ENCODE measurements at regions of chr3 and their contacts with region 1.

Region 1: GRCh38 chr3:4978204-4978965 is 852 bp upstream of the BHLHE40 start:
- DNase-seq: peak; percentile 95 to 99
- H3K4me3 ChIP-seq: peak overlapping the region; percentile 79 to 94
- H3K27ac ChIP-seq: peak overlapping the region; percentile 97 to 99
- H3K4me1 ChIP-seq: peaks cover 5 to 34% of the 10 kb centered on the region in 2 donors
- H3K27me3 ChIP-seq: no peaks in the 10 kb centered on the region
- CTCF ChIP-seq: no peak

Region 2: GRCh38 chr3:4303187-4304123 is 674.9 kb before region 1 on chr3 and contains the start of gene SETMAR:
- intact Hi-C with region 1: loop called (anchors 5 kb)
- DNase-seq: peak; percentile 75 to 97
- H3K4me3 ChIP-seq: peak within 1 kb of the TSS; percentile 90 to 92
- H3K27ac ChIP-seq: peak within 1 kb of the TSS; percentile 91 to 96
- H3K4me1 ChIP-seq: peaks cover 8 to 42% of the 10 kb centered on the region in 2 donors
- H3K27me3 ChIP-seq: no peaks in the 10 kb centered on the region
- CTCF ChIP-seq: no peak
- total RNA-seq, gene SETMAR: 13.6 TPM

Region 3: GRCh38 chr3:4584456-4585249 is 393.7 kb before region 1 on chr3:
- intact Hi-C with region 1: loop called (anchors 5 kb)
- DNase-seq: no peak
- H3K4me3 ChIP-seq: peak overlapping the region; percentile 43 to 57
- H3K27ac ChIP-seq: peak overlapping the region; percentile 84 to 86
- H3K4me1 ChIP-seq: peaks cover 0 to 41% of the 10 kb centered on the region in 2 donors
- H3K27me3 ChIP-seq: no peaks in the 10 kb centered on the region
- CTCF ChIP-seq: peak in 2 of 3 experiments; percentile 39 to 55

Region 4: GRCh38 chr3:4741404-4742307 is 236.7 kb before region 1 on chr3:
- intact Hi-C with region 1: loop called (anchors 2 kb)
- DNase-seq: peak; percentile 41 to 91
- H3K4me3 ChIP-seq: no peak overlapping the region
- H3K27ac ChIP-seq: peak overlapping the region; percentile 93 to 96
- H3K4me1 ChIP-seq: peaks cover 13 to 24% of the 10 kb centered on the region in 2 donors
- H3K27me3 ChIP-seq: no peaks in the 10 kb centered on the region
- CTCF ChIP-seq: no peak

Region 5: DNA sequence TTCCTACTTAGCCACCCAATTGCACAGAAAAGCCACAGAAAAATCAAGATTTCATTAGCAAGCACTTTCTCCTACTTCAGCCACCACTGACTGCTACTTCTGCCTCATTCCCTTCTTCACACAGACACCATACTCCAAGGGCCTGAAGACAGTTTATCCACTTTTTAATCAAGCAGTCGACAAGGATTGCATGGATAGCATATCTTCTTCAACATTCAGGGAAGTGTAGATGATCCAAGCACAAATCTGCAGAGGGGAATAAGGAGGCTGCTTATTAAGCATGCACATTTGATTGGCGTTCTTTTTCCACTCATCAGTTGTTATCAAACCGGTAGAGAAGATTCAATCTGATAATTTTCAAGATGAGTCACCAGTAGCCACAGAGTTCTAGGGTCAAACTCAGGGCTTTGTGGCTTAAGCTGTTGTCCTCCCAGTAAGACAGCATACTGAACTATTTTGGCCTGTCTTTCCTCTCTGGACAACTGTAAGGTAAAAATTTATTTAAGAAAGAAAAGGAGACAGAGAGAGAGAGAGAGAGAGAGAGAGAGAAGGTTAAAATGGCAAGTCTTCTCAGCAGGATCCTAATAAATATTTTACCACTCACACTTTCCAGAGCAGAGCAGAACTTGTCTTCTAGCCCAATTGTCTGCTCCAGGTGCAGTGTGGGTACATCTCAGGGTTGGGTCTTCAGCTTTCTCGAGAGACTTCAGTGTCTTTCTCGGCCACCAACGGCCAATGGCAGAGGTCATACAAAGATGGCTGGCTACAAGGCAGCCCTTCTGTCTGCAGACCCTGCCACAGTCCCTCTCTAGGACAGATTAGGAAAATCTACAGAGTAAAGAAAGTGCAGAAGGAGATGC is 79.7 kb before region 1 on chr3:
- intact Hi-C with region 1: loop called (anchors 5 kb)
- DNase-seq: no peak
- H3K4me3 ChIP-seq: peak overlapping the region in 1 of 2 donors; percentile 25
- H3K27ac ChIP-seq: peak overlapping the region; percentile 75 to 85
- H3K4me1 ChIP-seq: peaks cover 0 to 16% of the 10 kb centered on the region in 2 donors
- H3K27me3 ChIP-seq: no peaks in the 10 kb centered on the region
- CTCF ChIP-seq: no peak

Region 6: DNA sequence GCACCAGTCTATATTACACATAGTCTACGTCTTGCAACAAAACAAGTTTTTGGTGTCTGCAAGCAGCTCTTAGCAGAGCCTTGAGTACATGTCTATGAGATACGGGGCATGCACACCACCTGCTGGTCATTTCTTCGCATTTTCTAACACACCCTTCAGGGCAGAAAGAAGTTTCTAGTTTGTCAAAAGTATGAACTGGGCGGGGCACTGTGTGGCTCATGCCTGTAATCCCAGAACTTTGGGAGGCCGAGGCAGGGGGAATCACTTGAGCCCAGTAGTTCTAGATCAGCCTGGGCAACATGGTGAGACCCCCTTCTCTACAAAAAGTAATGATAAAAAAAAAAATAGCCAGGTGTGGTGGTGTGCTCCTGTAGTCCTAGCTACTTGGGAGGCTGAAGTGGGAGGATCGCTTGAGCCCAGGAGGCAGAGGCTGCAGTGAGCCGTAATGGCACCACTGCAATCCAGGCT is 79.5 kb after region 1 on chr3:
- intact Hi-C with region 1: loop called (anchors 2 kb)
- DNase-seq: peak; percentile 49 to 89
- H3K4me3 ChIP-seq: no peak overlapping the region
- H3K27ac ChIP-seq: no peak overlapping the region
- H3K4me1 ChIP-seq: peaks cover 0 to 7% of the 10 kb centered on the region in 2 donors
- H3K27me3 ChIP-seq: no peaks in the 10 kb centered on the region
- CTCF ChIP-seq: peak; percentile 70 to 79 (median 77)